GM12878 (cell line): ENCODE measurements at regions of chr12 and their contacts with region 1.

Region 1: GRCh38 chr12:121626087-121626852 is at the start of gene ORAI1:
- DNase-seq: peak; percentile 63
- ATAC-seq: peak; percentile 75
- H3K4me3 ChIP-seq: peak within 1 kb of the TSS; percentile 83
- H3K27ac ChIP-seq: peak within 1 kb of the TSS; percentile 92
- H3K4me1 ChIP-seq: peaks cover 19% of the 10 kb centered on the region
- H3K27me3 ChIP-seq: no peaks in the 10 kb centered on the region
- CTCF ChIP-seq: peak in 1 of 3 experiments; percentile 31; a peak in 1 of 6 replicates
- EP300 ChIP-seq: no peak
- POLR2A ChIP-seq: peak; percentile 85
- RAD21 ChIP-seq: no peak
- polyA plus RNA-seq, gene ORAI1: 5.5 to 6.1 TPM

Region 2: DNA sequence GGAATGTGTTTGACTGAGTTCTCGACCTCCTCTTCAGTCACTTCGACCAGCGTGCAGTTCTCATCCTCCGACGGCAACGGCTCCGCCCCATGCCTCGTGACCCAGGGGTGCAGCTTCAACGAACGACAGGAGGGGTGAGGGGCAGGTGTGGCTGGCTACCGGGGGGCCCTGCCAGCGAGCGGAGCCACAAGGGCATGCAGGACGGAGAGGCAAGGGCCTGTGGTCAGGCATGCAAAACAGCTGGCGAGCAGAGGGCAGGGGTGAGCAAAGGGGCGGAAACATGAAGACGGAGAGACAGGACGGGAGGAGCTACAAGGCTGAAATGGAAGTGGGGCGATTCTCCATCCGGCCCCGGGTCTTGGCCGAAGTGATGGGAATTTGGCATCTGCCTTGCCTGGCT is 377.6 kb before region 1 on chr12:
- CTCF ChIA-PET with region 1: no interaction called
- POLR2A ChIA-PET with region 1: no interaction called
- RAD21 ChIA-PET with region 1: no interaction called
- SMC1A ChIA-PET with region 1: no interaction called
- in situ Hi-C with region 1: no loop called
- intact Hi-C with region 1: no loop called
- DNase-seq: peak; percentile 70
- ATAC-seq: peak; percentile 96
- H3K4me3 ChIP-seq: no peak overlapping the region
- H3K27ac ChIP-seq: peak overlapping the region; percentile 27
- H3K4me1 ChIP-seq: peaks cover 15% of the 10 kb centered on the region
- H3K27me3 ChIP-seq: no peaks in the 10 kb centered on the region
- CTCF ChIP-seq: no peak
- EP300 ChIP-seq: 0 out of 4 replicates have a peak, but pooled peaks of 1 of the 2 experiments have one; percentile 35
- POLR2A ChIP-seq: peak; percentile 63
- RAD21 ChIP-seq: no peak

Region 3: GRCh38 chr12:121536899-121537813 is 89.1 kb before region 1 on chr12:
- CTCF ChIA-PET with region 1: interaction called, 5 read pairs
- POLR2A ChIA-PET with region 1: interaction called, 15 read pairs
- RAD21 ChIA-PET with region 1: interaction called, 14 read pairs
- SMC1A ChIA-PET with region 1: interaction called, 7 read pairs
- in situ Hi-C with region 1: no loop called
- intact Hi-C with region 1: no loop called
- DNase-seq: peak; percentile 82
- ATAC-seq: peak; percentile 81
- H3K4me3 ChIP-seq: peak overlapping the region; percentile 78
- H3K27ac ChIP-seq: peak overlapping the region; percentile 95
- H3K4me1 ChIP-seq: peaks cover 27% of the 10 kb centered on the region
- H3K27me3 ChIP-seq: no peaks in the 10 kb centered on the region
- CTCF ChIP-seq: no peak
- EP300 ChIP-seq: peak in 1 of 2 experiments; percentile 42; a peak in 2 of 4 replicates
- POLR2A ChIP-seq: peak; percentile 91
- RAD21 ChIP-seq: no peak

Region 4: DNA sequence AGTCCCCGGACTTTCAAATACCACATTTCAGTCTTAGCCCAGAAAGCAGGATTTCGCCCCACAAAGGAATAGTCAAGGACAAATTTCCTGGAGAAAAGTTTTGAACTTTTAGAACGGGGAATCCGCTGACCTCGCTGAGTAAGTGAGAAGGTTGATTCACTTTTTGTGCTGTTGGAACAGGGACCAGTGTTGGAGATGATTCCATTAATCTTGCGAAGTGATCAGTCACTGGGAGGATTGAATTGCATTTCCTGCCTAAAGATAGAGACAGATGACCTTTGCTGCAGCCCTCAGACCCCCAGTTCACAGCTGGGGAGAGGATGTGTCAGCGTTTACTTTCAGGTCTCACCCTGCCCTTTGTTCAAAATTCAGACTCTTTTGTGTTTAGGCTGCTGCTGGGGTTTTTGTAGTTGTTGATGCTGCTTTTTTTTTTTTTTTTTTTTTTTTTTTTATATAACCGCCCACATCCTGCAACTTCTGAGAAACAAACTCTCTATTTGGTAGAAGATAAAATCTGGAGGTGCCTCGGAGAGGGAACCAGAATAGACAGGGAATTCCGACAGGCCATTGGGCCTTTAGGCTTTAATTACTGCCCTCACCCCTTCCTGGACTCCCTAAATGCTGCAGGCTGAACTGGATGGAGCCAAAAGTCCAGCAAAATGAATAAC is 35.7 kb before region 1 on chr12:
- CTCF ChIA-PET with region 1: interaction called, 5 read pairs
- POLR2A ChIA-PET with region 1: interaction called, 5 read pairs
- RAD21 ChIA-PET with region 1: interaction called, 3 read pairs
- SMC1A ChIA-PET with region 1: interaction called, 3 read pairs
- in situ Hi-C with region 1: no loop called
- intact Hi-C with region 1: loop called (anchors 2 kb)
- DNase-seq: peak; percentile 74
- ATAC-seq: peak; percentile 91
- H3K4me3 ChIP-seq: peak overlapping the region; percentile 61
- H3K27ac ChIP-seq: peak overlapping the region; percentile 82
- H3K4me1 ChIP-seq: peaks cover 10% of the 10 kb centered on the region
- H3K27me3 ChIP-seq: no peaks in the 10 kb centered on the region
- CTCF ChIP-seq: no peak
- EP300 ChIP-seq: peak in 1 of 2 experiments; percentile 62; a peak in 1 of 4 replicates
- POLR2A ChIP-seq: peak; percentile 63
- RAD21 ChIP-seq: no peak

Region 5: DNA sequence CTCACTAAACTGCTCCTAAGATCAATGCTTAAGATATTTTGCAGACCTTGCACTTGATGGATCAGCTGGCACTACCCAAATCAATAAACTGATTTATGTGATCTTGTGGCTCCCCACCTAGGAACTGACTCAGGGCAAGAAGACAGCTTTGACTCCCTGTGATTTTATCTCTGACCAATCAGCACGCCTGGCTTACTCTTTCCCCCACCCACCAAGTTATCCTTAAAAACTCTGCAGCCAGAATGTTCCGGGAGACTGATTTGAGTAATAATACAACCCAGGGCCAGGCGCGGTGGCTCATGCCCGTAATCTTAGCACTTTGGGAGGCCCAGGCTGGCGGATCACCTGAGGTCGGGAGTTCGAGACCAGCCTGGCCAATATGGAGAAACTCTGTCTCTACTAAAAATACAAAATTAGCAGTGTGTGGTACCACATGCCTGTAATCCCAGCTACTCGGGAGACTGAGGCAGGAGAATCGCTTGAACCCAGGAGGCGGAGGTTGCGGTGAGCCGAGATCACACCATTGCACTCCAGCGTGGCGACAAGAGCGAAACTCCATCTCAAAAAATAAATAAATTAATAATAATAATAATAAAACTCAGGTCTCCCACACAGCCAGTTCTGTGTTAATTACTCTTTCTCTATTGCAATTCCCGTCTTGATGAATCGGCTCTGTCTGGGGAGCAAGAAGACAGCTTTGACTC is 31.2 kb after region 1 on chr12:
- CTCF ChIA-PET with region 1: interaction called, 5 read pairs
- POLR2A ChIA-PET with region 1: interaction called, 11 read pairs
- RAD21 ChIA-PET with region 1: interaction called, 22 read pairs
- SMC1A ChIA-PET with region 1: interaction called, 7 read pairs
- in situ Hi-C with region 1: no loop called
- intact Hi-C with region 1: no loop called
- DNase-seq: no peak
- ATAC-seq: no peak
- H3K4me3 ChIP-seq: no peak overlapping the region
- H3K27ac ChIP-seq: no peak overlapping the region
- H3K4me1 ChIP-seq: peaks cover 25% of the 10 kb centered on the region
- H3K27me3 ChIP-seq: no peaks in the 10 kb centered on the region
- CTCF ChIP-seq: no peak
- EP300 ChIP-seq: no peak
- POLR2A ChIP-seq: no peak
- RAD21 ChIP-seq: no peak

Region 6: GRCh38 chr12:121678716-121679580 is 52.7 kb after region 1 on chr12:
- CTCF ChIA-PET with region 1: interaction called, 28 read pairs
- POLR2A ChIA-PET with region 1: interaction called, 3 read pairs
- RAD21 ChIA-PET with region 1: interaction called, 3 read pairs
- SMC1A ChIA-PET with region 1: interaction called, 5 read pairs
- in situ Hi-C with region 1: no loop called
- intact Hi-C with region 1: no loop called
- DNase-seq: no peak
- ATAC-seq: no peak
- H3K4me3 ChIP-seq: no peak overlapping the region
- H3K27ac ChIP-seq: no peak overlapping the region
- H3K4me1 ChIP-seq: no peaks in the 10 kb centered on the region
- H3K27me3 ChIP-seq: no peaks in the 10 kb centered on the region
- CTCF ChIP-seq: no peak
- EP300 ChIP-seq: no peak
- POLR2A ChIP-seq: no peak
- RAD21 ChIP-seq: no peak